ENCODE measurements at regions of chr2 and their contacts with region 1.

Region 1: GRCh38 chr2:54723131-54723995 is at the start of gene EML6:
- DNase-seq: peak; percentile 98 to 100 (median 98)
- H3K4me3 ChIP-seq: peak within 1 kb of the TSS; percentile 61 to 79
- H3K4me3 Mint-ChIP-seq: peak within 1 kb of the TSS; percentile 93 to 97 (median 94)
- H3K27ac ChIP-seq: peak within 1 kb of the TSS; percentile 53
- H3K27ac Mint-ChIP-seq: peak within 1 kb of the TSS; percentile 57 to 94 (median 92)
- H3K4me1 ChIP-seq: peaks cover 18% of the 10 kb centered on the region
- H3K4me1 Mint-ChIP-seq: peaks cover 8 to 29% (median 16%) of the 10 kb centered on the region in 4 donors
- H3K27me3 ChIP-seq: peaks cover 15% of the 10 kb centered on the region
- H3K27me3 Mint-ChIP-seq: peaks cover 16 to 25% of the 10 kb centered on the region in 2 donors
- total RNA-seq, gene EML6: 1.8 to 3.9 TPM

Region 2: DNA sequence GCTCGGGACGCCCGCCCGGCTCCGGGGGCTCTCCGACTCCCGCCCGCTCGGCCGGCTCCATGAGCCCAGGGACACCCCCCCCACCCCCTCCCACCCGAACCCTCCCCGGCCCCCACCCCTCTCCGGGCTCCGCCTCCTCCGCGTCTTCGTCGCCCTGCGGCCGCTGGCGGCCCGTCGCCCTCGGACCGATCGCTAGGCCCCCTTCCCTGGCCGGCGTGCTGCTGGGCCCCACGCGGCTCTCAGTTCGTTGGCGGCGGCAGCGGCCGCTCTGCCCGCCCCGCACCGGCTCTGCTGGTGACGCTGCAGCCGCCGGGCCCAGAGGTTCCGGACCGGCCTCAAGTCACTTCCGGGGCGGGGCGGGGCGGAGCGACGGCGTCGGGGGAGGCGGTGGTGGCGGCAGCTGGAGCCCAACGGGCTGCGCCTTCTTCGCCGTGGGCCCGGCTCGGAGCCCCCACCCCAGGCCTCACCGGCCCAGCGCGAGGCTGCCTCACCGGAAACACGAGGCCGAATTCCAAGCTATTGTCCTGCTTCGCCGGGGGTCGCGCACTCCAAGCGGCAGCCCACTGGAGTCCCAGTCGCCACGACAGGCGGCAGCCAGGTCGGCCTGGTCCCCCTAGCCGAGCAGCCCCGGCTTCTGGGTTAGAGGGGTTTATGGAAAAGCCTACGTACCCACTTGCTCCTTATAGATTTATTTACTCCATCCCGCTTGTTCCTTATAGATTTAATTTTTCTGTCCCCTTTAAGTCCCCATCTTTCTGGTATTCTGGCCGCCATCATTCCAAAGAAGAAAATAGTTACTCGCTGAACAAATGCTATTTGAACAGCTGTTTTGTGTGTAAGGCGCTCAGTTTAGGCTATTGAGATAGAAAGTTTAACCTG is 752.4 kb before region 1 on chr2 and contains the start of gene PSME4:
- CTCF ChIA-PET with region 1: no interaction called
- POLR2A ChIA-PET with region 1: no interaction called
- intact Hi-C with region 1: loop called (anchors 10 kb)
- DNase-seq: peak; percentile 89 to 94 (median 89)
- H3K4me3 ChIP-seq: peak within 1 kb of the TSS; percentile 97 to 99
- H3K4me3 Mint-ChIP-seq: peak within 1 kb of the TSS; percentile 89 to 100 (median 96)
- H3K27ac ChIP-seq: peak within 1 kb of the TSS; percentile 90
- H3K27ac Mint-ChIP-seq: peak within 1 kb of the TSS; percentile 93 to 99 (median 98)
- H3K4me1 ChIP-seq: peaks cover 51% of the 10 kb centered on the region
- H3K4me1 Mint-ChIP-seq: peaks cover 41 to 67% (median 48%) of the 10 kb centered on the region in 4 donors
- H3K27me3 ChIP-seq: no peaks in the 10 kb centered on the region
- H3K27me3 Mint-ChIP-seq: no peaks in the 10 kb centered on the region
- total RNA-seq, gene PSME4: 41.7 to 49.9 TPM

Region 3: GRCh38 chr2:54341656-54342055 is 381.7 kb before region 1 on chr2:
- CTCF ChIA-PET with region 1: no interaction called
- POLR2A ChIA-PET with region 1: no interaction called
- intact Hi-C with region 1: no loop called
- DNase-seq: no peak
- H3K4me3 ChIP-seq: no peak overlapping the region
- H3K4me3 Mint-ChIP-seq: no peak overlapping the region
- H3K27ac ChIP-seq: no peak overlapping the region
- H3K27ac Mint-ChIP-seq: no peak overlapping the region
- H3K4me1 ChIP-seq: no peaks in the 10 kb centered on the region
- H3K4me1 Mint-ChIP-seq: no peaks in the 10 kb centered on the region
- H3K27me3 ChIP-seq: peaks cover 5% of the 10 kb centered on the region
- H3K27me3 Mint-ChIP-seq: peaks cover 2 to 8% of the 10 kb centered on the region in 2 donors

Region 4: DNA sequence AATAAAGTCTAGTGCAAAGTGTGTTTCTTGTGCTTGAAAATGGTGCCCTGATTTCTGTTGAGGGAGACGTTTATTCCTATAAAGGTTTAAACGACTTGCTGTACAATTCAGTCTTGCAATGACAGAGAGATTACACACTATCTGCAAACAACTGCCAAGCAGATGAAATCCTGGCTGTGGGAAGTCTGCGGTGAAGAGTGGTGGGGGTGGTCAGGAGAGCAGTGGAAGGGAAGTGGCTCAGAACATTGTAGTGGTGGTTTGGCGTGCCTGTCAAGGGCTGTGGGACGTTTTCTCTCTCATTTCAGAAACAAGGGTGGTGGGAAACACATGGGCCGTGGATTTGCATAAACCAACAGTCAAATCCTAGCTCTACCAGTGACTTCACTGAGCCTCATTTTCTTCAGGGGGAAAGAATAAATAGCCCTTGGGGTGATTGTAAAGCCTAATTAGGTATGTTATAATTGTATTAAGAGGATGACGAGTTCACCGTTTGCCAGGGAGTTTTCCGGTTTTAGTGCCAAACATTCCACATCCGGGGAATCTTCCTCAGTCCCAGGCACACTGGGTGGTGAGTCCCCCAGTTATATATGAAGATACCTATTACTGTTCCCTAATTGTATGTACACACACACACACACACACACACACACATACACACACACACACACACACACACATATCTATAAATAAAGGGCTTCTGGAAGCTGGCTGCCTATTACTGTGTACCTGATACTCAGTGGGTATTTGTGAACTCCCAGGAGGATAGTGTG is 152.3 kb before region 1 on chr2:
- CTCF ChIA-PET with region 1: no interaction called
- POLR2A ChIA-PET with region 1: interaction called, 5 read pairs
- intact Hi-C with region 1: loop called (anchors 5 kb)
- DNase-seq: peak; percentile 63 to 87 (median 72)
- H3K4me3 ChIP-seq: peak overlapping the region in 1 of 2 donors; percentile 11
- H3K4me3 Mint-ChIP-seq: peak overlapping the region; percentile 43 to 95 (median 80)
- H3K27ac ChIP-seq: peak overlapping the region; percentile 94
- H3K27ac Mint-ChIP-seq: peak overlapping the region; percentile 93 to 99 (median 99)
- H3K4me1 ChIP-seq: peaks cover 96% of the 10 kb centered on the region
- H3K4me1 Mint-ChIP-seq: peaks cover 64 to 99% (median 84%) of the 10 kb centered on the region in 4 donors
- H3K27me3 ChIP-seq: no peaks in the 10 kb centered on the region
- H3K27me3 Mint-ChIP-seq: no peaks in the 10 kb centered on the region

Region 5: GRCh38 chr2:55168221-55169154 is 445.1 kb after region 1 on chr2:
- CTCF ChIA-PET with region 1: no interaction called
- POLR2A ChIA-PET with region 1: no interaction called
- intact Hi-C with region 1: loop called (anchors 5 kb)
- DNase-seq: peak; percentile 37 to 50 (median 41)
- H3K4me3 ChIP-seq: no peak overlapping the region
- H3K4me3 Mint-ChIP-seq: no peak overlapping the region
- H3K27ac ChIP-seq: no peak overlapping the region
- H3K27ac Mint-ChIP-seq: peak overlapping the region in 1 of 7 donors; percentile 0
- H3K4me1 ChIP-seq: no peaks in the 10 kb centered on the region
- H3K4me1 Mint-ChIP-seq: peaks cover 0 to 3% (median 1%) of the 10 kb centered on the region in 4 donors
- H3K27me3 ChIP-seq: no peaks in the 10 kb centered on the region
- H3K27me3 Mint-ChIP-seq: no peaks in the 10 kb centered on the region

Region 6: GRCh38 chr2:55519938-55520885 is 796.8 kb after region 1 on chr2:
- CTCF ChIA-PET with region 1: no interaction called
- POLR2A ChIA-PET with region 1: interaction called, 5 read pairs
- intact Hi-C with region 1: loop called (anchors 1 kb)
- DNase-seq: peak in 2 of 5 donors; percentile 30 to 67
- H3K4me3 ChIP-seq: peak overlapping the region; percentile 69 to 84
- H3K4me3 Mint-ChIP-seq: peak overlapping the region; percentile 95 to 100 (median 98)
- H3K27ac ChIP-seq: peak overlapping the region; percentile 83
- H3K27ac Mint-ChIP-seq: peak overlapping the region; percentile 98 to 100 (median 99)
- H3K4me1 ChIP-seq: peaks cover 22% of the 10 kb centered on the region
- H3K4me1 Mint-ChIP-seq: peaks cover 11 to 23% (median 19%) of the 10 kb centered on the region in 4 donors
- H3K27me3 ChIP-seq: no peaks in the 10 kb centered on the region
- H3K27me3 Mint-ChIP-seq: no peaks in the 10 kb centered on the region